ENCODE measurements at regions of chr14 and their contacts with region 1.

Region 1: DNA sequence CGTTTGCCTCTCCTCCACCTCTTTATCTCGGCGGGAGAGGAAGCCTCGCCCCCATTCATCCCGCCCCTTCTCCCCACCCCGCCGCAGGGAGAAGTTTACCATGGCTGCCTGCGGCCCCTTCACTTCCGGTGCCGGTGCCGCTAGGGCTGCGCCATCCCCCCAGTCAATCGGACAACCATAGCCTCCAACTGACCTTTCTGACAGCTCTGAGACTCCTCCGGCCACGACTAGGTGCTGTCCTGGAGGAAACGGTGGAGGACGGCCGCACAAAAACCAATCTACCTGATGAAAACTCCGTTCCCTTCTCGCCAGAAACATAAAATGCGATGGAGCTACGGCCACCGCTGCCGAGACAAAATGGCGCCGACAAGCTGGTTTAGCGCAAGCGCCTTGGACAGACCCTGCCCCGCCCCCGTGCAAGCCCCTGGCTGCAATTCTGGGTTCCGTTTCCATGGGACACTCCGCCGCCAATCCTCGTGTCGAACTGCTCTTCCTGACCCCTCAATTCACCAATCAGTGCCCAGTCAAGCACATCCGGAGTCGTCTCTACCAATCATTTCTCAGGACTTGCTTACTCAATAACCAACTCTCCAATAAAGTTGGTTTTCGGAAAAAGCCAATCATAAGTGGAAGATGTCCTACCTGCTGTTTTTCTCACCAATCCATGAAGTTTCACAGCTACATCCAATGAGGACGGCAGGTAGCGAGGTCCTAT is 436 bp upstream of the ARID4A start:
- DNase-seq: peak; percentile 99
- ATAC-seq: peak; percentile 98
- H3K4me3 ChIP-seq: peak overlapping the region; percentile 56 to 90
- H3K27ac ChIP-seq: peak overlapping the region; percentile 47 to 99
- H3K4me1 ChIP-seq: no peaks in the 10 kb centered on the region
- H3K27me3 ChIP-seq: no peaks in the 10 kb centered on the region

Region 2: DNA sequence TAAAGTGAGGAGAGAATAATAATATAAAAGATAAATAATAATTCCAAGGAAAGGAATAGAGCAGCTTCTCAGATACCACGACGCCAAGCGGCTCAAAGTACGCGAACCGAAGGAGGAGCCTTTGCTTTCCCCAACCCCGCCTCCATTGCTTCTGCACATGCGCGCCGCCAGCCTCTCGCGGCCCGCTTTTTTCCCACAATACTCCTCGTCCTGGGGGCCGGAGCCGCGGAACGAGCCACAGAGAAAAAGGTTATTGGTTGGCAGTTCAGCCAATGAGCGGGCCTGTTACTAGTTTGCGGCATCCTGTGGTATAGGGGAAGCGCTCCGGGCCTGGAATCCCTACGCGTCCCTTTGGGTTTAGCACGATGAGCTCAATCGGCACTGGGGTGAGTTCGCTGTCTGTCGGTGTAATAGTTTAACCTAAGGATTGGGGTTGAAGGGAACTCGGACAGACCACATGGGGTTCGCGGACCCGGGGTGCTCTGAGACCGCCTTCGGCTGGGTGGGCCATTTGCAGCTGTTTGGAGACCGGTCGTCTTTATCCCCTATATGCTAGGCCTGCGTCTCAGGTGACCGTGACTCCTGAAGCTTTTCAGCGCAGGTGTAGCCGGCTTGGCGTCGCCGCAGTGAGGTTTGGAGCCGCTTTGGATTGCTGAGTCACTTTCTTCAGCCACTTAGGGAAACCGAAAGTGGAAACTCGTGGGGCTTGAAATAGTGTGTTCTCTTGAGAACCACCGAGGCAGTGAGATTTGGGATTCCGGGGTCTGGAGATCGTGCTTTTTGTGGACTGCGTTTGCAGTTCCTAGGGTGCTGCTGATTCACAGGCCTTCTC is 53.1 kb before region 1 on chr14 and contains the start of gene PSMA3:
- intact Hi-C with region 1: loop called (anchors 2 to 5 kb)
- DNase-seq: peak; percentile 99
- ATAC-seq: peak; percentile 96
- H3K4me3 ChIP-seq: peak within 1 kb of the TSS; percentile 65 to 98
- H3K27ac ChIP-seq: peak within 1 kb of the TSS; percentile 83 to 89
- H3K4me1 ChIP-seq: peaks cover 3 to 7% of the 10 kb centered on the region in 2 donors
- H3K27me3 ChIP-seq: no peaks in the 10 kb centered on the region
- total RNA-seq, gene PSMA3: 125 to 136 TPM

Measured in aorta (tissue), 5 donors.